ENCODE measurements at regions of chr2 and their contacts with region 1.

Region 1: DNA sequence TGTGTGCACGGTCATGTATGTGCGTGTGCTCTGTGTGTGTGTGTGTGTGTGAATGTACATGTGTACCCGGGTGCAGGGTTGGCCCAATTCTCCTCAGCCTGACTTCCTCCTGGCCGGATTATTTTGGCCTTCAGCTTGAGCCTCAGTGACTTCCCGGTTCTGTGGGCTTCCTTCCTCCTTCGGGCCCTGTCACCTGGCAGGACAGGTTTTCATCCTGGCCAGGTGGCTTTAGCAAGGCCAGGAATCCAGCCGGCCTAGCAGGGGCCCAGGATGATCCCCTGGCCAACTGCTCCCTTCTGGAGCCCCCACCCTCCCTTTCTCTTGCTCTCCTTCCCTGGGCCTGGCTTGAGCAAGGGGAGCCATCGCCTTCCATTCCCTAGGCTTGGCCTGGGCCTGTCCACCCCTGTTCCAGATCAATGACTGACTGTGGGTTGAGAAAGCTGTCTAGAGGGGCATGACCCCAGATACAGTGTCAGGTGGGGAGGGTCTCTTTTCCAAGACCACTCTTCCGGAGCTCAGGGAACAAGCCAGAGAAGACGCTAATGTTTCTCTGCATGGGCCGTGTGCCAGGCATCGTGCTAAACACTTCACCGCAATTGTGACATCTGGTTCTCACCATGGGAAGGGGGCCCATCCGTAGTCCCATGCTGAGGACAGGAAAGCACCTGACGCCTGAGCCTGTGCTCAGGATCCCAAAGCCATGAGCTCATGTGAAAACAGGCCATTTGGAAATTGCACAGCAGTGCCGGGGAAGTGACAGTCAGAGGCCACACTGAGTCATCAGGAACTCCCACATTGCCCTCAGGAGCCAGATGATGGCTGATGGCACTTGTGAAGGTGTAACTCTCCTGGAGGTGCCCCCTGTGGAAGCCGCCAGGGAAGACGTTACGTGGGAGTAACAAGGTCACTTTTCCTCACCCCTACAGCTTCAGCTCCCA is 140.8 kb downstream of the INHBB start:
- DNase-seq: no peak
- H3K4me3 ChIP-seq: no peak overlapping the region
- H3K27ac ChIP-seq: no peak overlapping the region
- H3K4me1 ChIP-seq: peaks cover 0 to 6% (median 0%) of the 10 kb centered on the region in 4 experiments; a peak in 2 of 7 replicates
- H3K27me3 ChIP-seq: peaks cover 0 to 35% (median 14%) of the 10 kb centered on the region in 4 experiments; a peak in 6 of 7 replicates
- CTCF ChIP-seq: no peak
- EP300 ChIP-seq: no peak
- POLR2A ChIP-seq: no peak
- RAD21 ChIP-seq: no peak

Region 2: GRCh38 chr2:119496682-119497081 is 990.0 kb before region 1 on chr2:
- CTCF ChIA-PET with region 1: no interaction called
- POLR2A ChIA-PET with region 1: no interaction called
- DNase-seq: no peak
- H3K4me3 ChIP-seq: no peak overlapping the region
- H3K27ac ChIP-seq: no peak overlapping the region
- H3K4me1 ChIP-seq: peaks cover 0 to 2% (median 0%) of the 10 kb centered on the region in 4 experiments; a peak in 2 of 7 replicates
- H3K27me3 ChIP-seq: no peaks in the 10 kb centered on the region
- CTCF ChIP-seq: no peak
- EP300 ChIP-seq: no peak
- POLR2A ChIP-seq: no peak
- RAD21 ChIP-seq: no peak

Region 3: DNA sequence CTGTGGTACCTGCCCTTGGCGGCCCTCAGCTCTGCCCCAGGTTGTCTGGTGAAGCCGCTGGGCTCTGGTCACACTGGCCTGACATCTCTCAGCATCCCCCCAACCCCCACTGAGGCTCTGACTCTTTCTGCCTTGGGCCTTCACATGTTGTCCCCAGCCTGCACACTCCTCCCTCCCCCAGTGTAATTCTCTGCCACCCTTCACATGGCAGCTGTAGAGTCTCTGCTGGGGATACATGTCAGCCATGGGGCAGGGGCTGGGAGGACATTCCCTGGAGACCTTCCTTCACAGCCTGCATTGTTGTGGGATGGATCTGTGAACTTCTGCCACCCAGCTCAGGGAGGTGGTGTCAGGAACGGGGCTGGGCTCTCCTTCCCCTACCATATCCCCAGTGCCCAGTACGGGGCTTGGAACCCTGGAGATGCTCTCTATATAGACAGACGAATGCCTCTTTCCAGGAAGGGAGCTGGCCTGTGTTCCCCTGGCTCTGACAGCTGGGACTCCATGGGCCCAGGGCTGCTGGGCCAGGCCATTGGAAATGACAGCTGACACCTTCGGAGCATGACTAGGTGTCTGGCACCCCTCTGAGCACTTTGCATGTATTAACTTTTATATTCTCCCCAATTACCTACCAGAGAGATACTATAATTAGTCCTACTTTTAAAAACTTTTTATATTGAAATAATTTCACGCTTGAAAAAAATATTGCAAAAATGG is 10.7 kb after region 1 on chr2:
- CTCF ChIA-PET with region 1: interaction called, 10 read pairs
- POLR2A ChIA-PET with region 1: no interaction called
- DNase-seq: no peak
- H3K4me3 ChIP-seq: no peak overlapping the region
- H3K27ac ChIP-seq: no peak overlapping the region
- H3K4me1 ChIP-seq: no peaks in the 10 kb centered on the region; a peak in 1 of 7 replicates
- H3K27me3 ChIP-seq: peaks cover 0 to 9% (median 5%) of the 10 kb centered on the region in 4 experiments; a peak in 4 of 7 replicates
- CTCF ChIP-seq: no peak
- EP300 ChIP-seq: no peak
- POLR2A ChIP-seq: no peak
- RAD21 ChIP-seq: no peak

Region 4: GRCh38 chr2:120771111-120771947 is 284.6 kb after region 1 on chr2:
- CTCF ChIA-PET with region 1: no interaction called
- POLR2A ChIA-PET with region 1: no interaction called
- DNase-seq: no peak
- H3K4me3 ChIP-seq: no peak overlapping the region
- H3K27ac ChIP-seq: no peak overlapping the region
- H3K4me1 ChIP-seq: peaks cover 20 to 58% (median 30%) of the 10 kb centered on the region in 4 experiments
- H3K27me3 ChIP-seq: no peaks in the 10 kb centered on the region
- CTCF ChIP-seq: no peak
- EP300 ChIP-seq: no peak
- POLR2A ChIP-seq: no peak
- RAD21 ChIP-seq: no peak